GM10248 (cell line): ENCODE measurements at regions of chr22 and their contacts with region 1.

Region 1: GRCh38 chr22:41888627-41889200 is 26.2 kb downstream of the SHISA8 start:
- DNase-seq: no peak
- CTCF ChIP-seq: no peak

Region 2: DNA sequence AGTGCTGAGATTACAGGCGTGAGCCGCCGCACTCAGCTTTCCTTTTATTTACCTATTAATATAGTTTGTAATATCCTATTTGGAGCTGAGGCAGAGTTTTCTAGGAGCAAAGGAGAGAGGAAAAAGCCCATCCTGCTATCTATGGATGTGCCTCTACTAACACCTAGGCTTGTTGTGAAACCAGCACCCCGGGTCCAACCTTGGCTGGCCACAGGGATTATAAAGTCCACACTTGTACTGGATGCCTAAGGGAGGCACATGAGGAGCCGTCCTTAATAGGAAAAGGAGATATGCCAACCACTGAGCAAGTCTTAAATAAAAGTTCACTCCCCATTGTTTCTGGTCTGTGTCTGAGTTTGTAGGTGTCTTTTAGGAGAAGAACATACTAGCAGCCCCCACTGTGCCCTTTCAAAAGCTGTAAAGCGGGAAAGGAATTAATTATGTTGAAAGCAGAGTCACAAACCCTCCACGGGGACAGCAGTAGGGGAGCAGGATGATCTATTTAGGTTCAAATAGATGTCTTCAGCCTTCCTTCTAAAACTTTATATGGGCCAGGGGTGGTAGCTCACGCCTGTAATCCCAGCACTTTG is 601.6 kb after region 1 on chr22:
- CTCF ChIA-PET with region 1: no interaction called
- POLR2A ChIA-PET with region 1: interaction called, 10 read pairs
- DNase-seq: no peak
- CTCF ChIP-seq: no peak